GM12878 (cell line): ENCODE measurements at regions of chr1 and their contacts with region 1.

Region 1: DNA sequence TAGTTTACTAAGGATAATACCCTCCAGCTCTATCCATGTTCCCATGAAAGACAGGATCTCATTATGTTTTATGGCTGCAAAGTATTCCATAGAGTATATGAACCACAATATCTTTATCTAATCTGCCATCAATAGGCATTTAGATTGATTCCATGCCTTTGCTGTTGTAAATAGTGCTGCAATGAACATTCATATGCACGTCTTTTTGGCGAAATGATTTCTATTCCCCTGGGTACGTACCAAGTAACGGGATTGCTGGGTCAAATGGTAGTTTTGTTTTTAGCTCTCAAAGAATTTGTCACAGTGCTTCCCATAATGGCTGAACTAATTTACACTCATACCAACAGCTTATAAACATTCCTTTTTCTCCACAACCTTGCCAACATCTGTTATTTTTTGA is 750.9 kb downstream of the BRINP3 start:
- DNase-seq: no peak
- ATAC-seq: no peak
- H3K4me3 ChIP-seq: no peak overlapping the region
- H3K27ac ChIP-seq: no peak overlapping the region
- H3K4me1 ChIP-seq: no peaks in the 10 kb centered on the region
- H3K27me3 ChIP-seq: no peaks in the 10 kb centered on the region
- CTCF ChIP-seq: no peak
- EP300 ChIP-seq: no peak
- POLR2A ChIP-seq: no peak
- RAD21 ChIP-seq: no peak

Region 2: DNA sequence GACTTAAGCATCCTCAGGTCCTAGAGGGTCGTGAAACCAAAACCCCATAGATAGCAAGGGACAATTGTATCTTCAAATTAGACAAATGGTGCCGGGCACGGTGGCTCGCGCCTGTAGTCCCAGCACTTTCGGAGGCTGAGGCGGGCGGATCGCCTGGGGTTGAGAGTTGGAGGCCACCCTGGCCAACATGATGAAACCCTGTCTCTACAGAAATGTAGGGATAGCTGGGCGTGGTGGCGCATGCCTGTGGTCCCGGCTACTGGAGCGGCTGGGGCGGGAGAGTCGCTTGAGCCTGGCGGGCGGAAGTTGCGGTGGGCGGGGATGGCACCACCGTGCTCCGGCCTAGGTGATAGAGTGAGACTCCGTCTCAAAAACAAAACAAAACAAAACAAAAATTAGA is 29.7 kb before region 1 on chr1:
- CTCF ChIA-PET with region 1: no interaction called
- POLR2A ChIA-PET with region 1: no interaction called
- RAD21 ChIA-PET with region 1: no interaction called
- SMC1A ChIA-PET with region 1: no interaction called
- in situ Hi-C with region 1: no loop called
- intact Hi-C with region 1: no loop called
- DNase-seq: no peak
- ATAC-seq: no peak
- H3K4me3 ChIP-seq: no peak overlapping the region
- H3K27ac ChIP-seq: no peak overlapping the region
- H3K4me1 ChIP-seq: no peaks in the 10 kb centered on the region
- H3K27me3 ChIP-seq: no peaks in the 10 kb centered on the region
- CTCF ChIP-seq: no peak
- EP300 ChIP-seq: no peak
- POLR2A ChIP-seq: no peak
- RAD21 ChIP-seq: no peak

Region 3: GRCh38 chr1:189816558-189816957 is 89.8 kb after region 1 on chr1:
- CTCF ChIA-PET with region 1: no interaction called
- POLR2A ChIA-PET with region 1: no interaction called
- RAD21 ChIA-PET with region 1: no interaction called
- SMC1A ChIA-PET with region 1: no interaction called
- in situ Hi-C with region 1: loop called (anchors 5 kb)
- intact Hi-C with region 1: no loop called
- DNase-seq: no peak
- ATAC-seq: no peak
- H3K4me3 ChIP-seq: no peak overlapping the region
- H3K27ac ChIP-seq: no peak overlapping the region
- H3K4me1 ChIP-seq: no peaks in the 10 kb centered on the region
- H3K27me3 ChIP-seq: no peaks in the 10 kb centered on the region
- CTCF ChIP-seq: no peak
- EP300 ChIP-seq: no peak
- POLR2A ChIP-seq: no peak
- RAD21 ChIP-seq: no peak